ENCODE measurements at regions of chr19 and their contacts with region 1.

Region 1: DNA sequence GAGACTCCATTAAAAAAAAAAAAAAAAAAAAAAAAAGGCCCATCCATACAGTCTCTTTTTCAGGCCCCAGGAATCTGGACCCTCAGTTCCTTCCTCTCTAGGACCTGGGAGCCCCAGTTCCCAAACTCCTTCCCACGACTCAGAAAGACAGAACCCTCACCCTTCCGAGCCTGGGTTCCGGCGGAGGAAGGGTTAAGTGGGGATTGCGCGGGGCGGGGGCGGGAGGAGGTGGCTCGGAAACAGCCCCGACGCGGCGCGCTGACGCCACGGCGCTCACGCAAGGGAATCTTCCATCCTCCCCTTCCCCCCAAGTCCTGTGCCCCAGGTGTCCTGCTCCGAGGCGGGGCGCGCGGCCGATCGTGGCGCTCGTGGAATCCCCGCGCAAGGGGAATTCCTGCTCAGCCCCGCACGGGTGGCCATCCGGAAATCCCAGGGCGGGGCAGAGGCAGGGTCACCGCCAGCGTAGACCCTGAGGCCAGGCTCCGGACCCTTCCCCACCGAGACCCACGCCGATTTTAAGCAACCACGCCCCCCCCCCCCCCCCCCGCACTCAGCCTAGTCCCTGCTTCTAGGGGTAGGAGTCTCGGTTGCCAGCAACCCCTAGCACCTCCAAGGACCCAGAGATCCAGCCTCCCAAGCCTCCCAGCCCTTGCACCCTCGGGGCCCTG is 659 bp downstream of the NFKBID start:
- DNase-seq: peak; percentile 82
- H3K4me3 Mint-ChIP-seq: peak overlapping the region; percentile 92
- H3K27ac Mint-ChIP-seq: peak overlapping the region; percentile 96
- H3K4me1 Mint-ChIP-seq: peaks cover 43% of the 10 kb centered on the region
- H3K27me3 Mint-ChIP-seq: no peaks in the 10 kb centered on the region

Region 2: GRCh38 chr19:35710784-35711723 is 188.6 kb before region 1 on chr19:
- intact Hi-C with region 1: loop called (anchors 2 kb)
- DNase-seq: peak; percentile 71
- H3K4me3 Mint-ChIP-seq: peak overlapping the region; percentile 66
- H3K27ac Mint-ChIP-seq: peak overlapping the region; percentile 100
- H3K4me1 Mint-ChIP-seq: peaks cover 40% of the 10 kb centered on the region
- H3K27me3 Mint-ChIP-seq: no peaks in the 10 kb centered on the region

Region 3: DNA sequence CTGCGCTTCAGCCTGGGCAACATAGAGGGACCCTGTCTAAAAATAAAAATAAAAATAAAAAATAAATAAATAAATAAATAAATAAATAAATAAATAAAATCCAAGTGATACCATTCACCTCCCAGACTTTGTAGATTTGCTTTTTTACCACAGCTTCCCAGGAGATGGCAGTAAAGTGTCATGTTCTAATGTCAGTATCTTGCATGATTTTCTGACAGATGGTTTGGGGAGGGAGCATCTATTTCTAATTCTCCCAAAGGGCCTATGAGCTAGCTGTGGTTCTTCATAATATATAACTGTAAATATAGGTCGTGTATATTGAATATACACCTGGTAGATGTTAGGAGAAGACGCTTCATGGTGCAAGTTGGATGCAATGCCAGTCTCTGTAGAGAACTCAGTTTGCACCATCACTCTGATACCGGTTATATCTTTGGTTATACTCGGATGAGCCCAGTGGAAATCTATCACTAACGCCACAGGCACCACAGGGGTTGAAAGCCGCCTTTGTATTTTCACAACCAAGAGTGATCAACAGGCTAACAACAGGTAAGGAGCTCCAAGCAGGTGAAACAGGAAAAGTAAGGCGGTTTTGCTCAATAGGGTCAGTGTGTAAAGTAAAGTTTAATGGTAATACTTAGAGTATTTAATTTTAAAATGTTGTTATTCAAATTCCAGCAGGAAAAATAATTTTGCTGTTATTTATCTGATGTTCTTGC is 17.4 kb before region 1 on chr19:
- intact Hi-C with region 1: loop called (anchors 2 kb)
- DNase-seq: no peak
- H3K4me3 Mint-ChIP-seq: no peak overlapping the region
- H3K27ac Mint-ChIP-seq: no peak overlapping the region
- H3K4me1 Mint-ChIP-seq: peaks cover 5% of the 10 kb centered on the region
- H3K27me3 Mint-ChIP-seq: peaks cover 7% of the 10 kb centered on the region

Measured in activated T-helper 2 cell treated with anti-CD3 and anti-CD28 coated beads, Interferon-gamma antibody, Interleukin-2, Interleukin-4, amounts not matched to agents 10 μg/mL and 5 μg/mL and 100 μg/mL, durations not matched to agents 14 hours and 24 hours and 36 hours (primary cell).